Left cardiac atrium (tissue), 4 donors: ENCODE measurements at regions of chr16 and their contacts with region 1.

Region 1: GRCh38 chr16:67490335-67491096 is 7.2 kb upstream of the AGRP start:
- DNase-seq: no peak
- ATAC-seq: no peak

Region 2: GRCh38 chr16:67415872-67416793 is 74.4 kb before region 1 on chr16 and contains the start of gene ZDHHC1:
- intact Hi-C with region 1: no loop called
- DNase-seq: peak; percentile 86
- ATAC-seq: peak; percentile 97 to 98
- total RNA-seq, gene ZDHHC1: 4.6 to 6.8 TPM

Region 3: DNA sequence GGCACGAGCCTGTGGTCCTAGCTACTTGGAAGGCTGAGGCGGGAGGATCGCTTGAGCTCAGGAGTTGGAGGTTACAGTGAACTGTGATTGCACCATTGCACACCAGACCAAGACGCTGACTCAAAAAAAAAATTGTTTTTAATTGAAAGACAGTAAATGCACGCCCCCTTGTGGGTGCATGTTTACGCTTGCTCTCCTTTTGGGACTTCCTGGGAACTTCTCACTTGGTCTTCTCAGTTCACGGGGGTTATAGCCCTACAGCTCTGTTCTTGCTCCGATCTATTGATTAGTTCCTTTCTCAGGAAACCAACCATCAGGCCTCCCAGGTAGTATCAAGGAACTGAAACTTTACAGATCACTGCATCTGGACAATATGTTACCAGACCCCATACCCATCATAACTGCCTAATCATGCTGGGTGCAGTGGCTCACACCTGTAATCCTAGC is 23.9 kb after region 1 on chr16:
- intact Hi-C with region 1: loop called in 1 of 2 experiments (anchors 2 kb)
- DNase-seq: peak; percentile 88
- ATAC-seq: peak; percentile 65 to 68

Region 4: DNA sequence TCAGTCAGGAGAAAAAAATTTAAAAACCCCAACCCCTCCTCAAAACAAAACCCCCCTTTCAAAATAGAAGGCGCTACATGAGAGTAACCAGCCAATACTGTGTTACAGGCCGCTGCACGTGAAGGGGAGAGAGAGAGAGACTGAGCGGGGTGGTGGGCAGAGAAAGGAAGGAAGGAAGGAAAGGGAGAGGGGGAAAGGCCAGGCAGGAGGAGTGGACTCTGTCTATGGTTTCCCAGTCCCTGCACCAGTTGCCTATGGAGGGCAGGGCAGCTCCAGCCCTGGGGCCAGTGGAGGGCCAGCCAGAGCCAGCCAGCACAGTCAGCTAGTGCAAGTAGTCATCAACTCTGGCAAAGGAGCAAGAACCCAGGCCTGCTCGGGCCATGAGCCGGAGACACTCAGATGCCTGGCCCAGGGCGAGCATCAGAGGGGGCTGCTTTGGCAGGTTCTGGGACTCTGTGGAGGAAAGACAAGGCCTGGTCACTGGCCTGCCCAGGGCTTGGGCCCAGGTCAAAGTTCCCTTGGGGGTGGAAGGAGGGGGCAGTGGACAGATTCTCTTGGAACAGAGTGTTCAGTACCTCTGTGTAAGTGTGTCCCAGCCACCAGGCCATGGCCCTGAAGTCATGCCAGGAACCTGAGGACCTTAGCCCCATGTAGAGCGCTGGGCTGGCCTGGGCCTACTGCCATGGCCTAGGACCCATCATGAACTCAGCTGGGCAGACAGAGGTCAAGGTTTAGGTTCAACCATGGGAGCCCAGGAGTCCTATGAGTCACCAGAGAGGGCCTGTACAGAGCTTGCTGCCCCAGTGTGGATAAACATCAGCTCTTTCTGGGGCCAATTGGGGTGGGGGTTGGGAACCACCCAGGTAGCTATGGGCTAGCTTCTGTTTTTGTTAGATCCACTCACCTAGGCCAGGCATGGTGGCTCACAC is 235.9 kb after region 1 on chr16:
- intact Hi-C with region 1: loop called in 1 of 2 experiments (anchors 5 kb)
- DNase-seq: no peak
- ATAC-seq: no peak

Region 5: DNA sequence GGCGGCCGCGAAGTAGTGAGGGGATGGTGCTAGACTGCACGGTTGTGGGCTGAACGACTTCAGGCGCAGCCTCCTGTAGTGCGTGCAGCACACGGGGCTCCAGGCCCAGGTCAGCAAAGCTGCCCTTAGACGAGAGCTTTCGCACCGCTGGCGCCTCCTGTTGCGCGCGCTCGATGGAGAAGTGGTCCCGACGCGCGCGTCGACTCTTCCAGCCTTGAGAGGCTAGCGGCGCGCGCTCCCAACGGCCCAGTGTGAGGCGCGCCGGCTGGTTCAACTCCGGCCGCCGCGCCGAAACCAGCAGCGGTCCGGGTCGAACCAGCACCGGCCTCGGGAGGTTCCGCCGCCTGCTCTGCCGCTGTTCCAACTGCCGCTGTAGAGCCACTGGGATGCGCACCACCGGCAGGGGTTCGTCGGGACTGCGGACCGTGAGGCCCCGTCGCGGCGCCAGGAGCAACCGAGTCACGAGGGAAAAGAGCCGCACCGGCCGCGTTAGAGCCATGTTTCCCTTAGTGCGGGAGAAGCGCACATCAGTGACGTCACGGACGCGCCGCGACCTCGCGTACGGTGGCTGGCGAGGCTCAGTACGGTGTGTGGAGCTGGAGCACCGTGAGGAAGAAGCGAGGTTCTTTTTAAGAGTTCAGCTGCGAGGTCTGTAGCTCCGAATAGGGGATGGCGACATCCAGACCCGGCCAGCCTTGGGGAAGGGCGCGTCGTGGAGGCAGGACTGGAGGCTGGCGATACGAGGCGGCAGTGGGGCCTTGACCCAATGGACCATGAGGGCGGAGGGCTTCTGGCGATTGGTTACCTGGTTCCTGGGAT is 532.4 kb after region 1 on chr16 and contains the starts of genes DDX28 and DUS2:
- intact Hi-C with region 1: no loop called
- DNase-seq: peak; percentile 93
- ATAC-seq: peak; percentile 98 to 99
- total RNA-seq, gene DDX28: 7.2 to 8.4 TPM
- total RNA-seq, gene DUS2: 6.9 to 7.2 TPM